Mammary epithelial cell (primary cell): ENCODE measurements at regions of chr12 and their contacts with region 1.

Region 1: DNA sequence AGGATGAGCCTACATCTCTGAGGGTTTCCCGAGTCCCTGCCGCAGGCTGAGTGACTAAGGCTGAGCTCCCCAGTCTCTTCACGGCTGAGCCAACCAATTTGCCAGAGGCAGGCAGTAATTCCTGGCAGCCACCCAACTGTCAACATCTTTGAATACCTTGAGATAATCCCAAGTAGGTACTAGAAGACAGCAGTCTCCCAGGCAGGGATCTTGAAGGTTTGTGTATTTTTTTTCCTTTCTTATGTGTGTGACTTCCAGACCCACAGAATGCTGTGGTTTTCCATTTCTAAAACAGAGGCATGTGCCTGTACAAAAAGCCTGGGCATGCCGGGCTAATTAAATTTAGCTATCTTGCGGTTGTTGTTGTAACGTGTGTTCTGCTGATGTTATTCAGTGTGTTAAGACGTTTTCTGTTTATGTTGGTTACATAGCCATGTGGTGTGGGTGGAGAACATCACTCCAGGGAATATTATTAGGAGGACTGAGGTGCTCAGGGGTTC is 155.5 kb downstream of the ANO2 start:
- DNase-seq: peak; percentile 56
- H3K4me3 ChIP-seq: no peak overlapping the region
- H3K27ac ChIP-seq: no peak overlapping the region
- H3K4me1 ChIP-seq: no peaks in the 10 kb centered on the region
- H3K27me3 ChIP-seq: no peaks in the 10 kb centered on the region
- CTCF ChIP-seq: no peak

Region 2: GRCh38 chr12:3973978-3974644 is 1815.4 kb before region 1 on chr12:
- CTCF ChIA-PET with region 1: no interaction called
- dilution Hi-C with region 1: no loop called
- in situ Hi-C with region 1: no loop called
- intact Hi-C with region 1: no loop called
- DNase-seq: no peak
- H3K4me3 ChIP-seq: no peak overlapping the region
- H3K27ac ChIP-seq: no peak overlapping the region
- H3K4me1 ChIP-seq: no peaks in the 10 kb centered on the region
- H3K27me3 ChIP-seq: peaks cover 2% of the 10 kb centered on the region
- CTCF ChIP-seq: no peak

Region 3: DNA sequence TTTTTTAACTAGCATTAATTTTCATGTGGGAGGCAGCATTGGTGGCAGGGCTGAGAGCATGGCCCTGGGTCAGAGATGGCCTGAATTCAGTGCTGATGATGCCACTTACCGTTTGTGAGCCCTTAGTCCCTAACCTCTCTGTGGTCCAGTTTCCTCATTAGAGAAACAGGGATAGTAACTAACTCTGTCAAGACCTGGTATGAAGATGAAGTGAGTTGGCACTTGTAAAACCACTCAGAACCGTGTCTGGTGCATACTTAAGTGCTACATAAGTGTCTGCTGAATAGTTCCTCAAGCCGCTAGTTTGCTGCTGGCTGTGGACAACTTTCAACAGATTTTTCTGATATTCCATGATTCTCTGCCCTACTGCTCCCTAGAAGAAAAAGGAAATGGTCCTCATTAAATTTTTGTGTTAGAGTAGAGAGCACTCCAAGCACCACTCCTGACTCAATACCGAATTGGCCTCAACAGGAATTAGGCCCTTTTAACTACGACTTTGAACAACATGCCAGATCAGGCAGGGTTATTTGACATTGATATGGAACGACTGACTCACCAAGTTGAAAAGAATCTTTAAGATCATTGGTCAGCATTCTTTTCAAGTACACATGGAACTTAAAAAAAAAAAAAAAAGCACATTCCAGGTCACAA is 94.6 kb before region 1 on chr12:
- CTCF ChIA-PET with region 1: no interaction called
- dilution Hi-C with region 1: loop called (anchors 5 kb)
- in situ Hi-C with region 1: no loop called
- intact Hi-C with region 1: no loop called
- DNase-seq: no peak
- H3K4me3 ChIP-seq: no peak overlapping the region
- H3K27ac ChIP-seq: no peak overlapping the region
- H3K4me1 ChIP-seq: no peaks in the 10 kb centered on the region
- H3K27me3 ChIP-seq: no peaks in the 10 kb centered on the region
- CTCF ChIP-seq: no peak

Region 4: DNA sequence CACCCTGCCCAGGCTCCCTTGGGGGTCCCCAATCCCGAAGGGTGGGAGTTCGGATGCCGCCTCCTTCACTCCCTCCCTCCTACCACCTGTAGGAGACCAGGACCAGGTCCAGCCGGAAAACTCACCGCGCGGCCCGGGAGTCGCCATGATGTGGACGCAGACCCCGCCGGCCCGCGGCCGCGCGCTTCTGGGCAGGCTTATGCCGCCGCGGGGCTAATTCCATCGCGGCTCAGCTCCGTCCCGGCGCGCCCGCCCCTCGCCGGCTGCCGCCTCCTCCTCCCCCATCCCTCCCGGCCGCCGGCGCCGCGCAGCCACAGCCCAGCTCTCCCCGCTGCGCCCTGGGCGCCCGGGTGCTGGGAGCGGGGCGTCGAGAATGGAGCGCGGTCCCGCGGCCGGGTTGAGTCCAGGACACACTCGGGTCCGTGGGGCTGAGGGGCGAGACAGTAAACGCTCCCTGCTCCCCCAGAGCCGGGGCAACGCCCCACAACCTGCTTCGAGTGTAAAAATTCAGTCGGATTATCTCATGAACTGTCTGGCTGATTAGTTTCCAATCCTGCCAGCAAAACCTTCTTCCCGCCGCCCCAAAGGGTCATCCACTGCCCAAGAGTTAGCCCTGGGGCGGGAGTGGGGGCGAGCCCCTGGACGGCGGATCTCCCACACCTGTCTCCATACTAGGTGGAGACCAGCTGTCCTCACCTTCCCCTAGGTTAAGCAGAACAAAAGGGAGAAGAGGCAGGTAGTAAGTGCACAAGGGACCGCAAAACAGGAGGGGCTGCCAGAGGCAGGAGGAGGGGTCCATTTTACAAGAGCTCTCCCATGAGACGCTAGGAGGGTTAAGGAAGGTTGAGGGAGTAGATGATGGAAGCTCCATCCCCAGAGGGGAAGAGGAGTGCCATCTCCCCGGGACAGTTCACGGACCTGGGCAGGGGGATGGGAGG is 155.8 kb after region 1 on chr12 and contains the start of gene ANO2:
- CTCF ChIA-PET with region 1: interaction called, 11 read pairs
- dilution Hi-C with region 1: no loop called
- in situ Hi-C with region 1: no loop called
- intact Hi-C with region 1: no loop called
- DNase-seq: no peak
- H3K4me3 ChIP-seq: peak within 1 kb of the TSS in 2 of 3 experiments; percentile 27
- H3K27ac ChIP-seq: no peak within 1 kb of the TSS
- H3K4me1 ChIP-seq: no peaks in the 10 kb centered on the region
- H3K27me3 ChIP-seq: peaks cover 29% of the 10 kb centered on the region
- CTCF ChIP-seq: no peak
- total RNA-seq, gene ANO2: under 0.01 TPM in 1 of 2 donors, not detected in the other